ENCODE measurements at regions of chr16 and their contacts with region 1.

Region 1: GRCh38 chr16:20928774-20929411 is 28.3 kb downstream of the LYRM1 start:
- DNase-seq: peak; percentile 29
- CTCF ChIP-seq: no peak

Region 2: DNA sequence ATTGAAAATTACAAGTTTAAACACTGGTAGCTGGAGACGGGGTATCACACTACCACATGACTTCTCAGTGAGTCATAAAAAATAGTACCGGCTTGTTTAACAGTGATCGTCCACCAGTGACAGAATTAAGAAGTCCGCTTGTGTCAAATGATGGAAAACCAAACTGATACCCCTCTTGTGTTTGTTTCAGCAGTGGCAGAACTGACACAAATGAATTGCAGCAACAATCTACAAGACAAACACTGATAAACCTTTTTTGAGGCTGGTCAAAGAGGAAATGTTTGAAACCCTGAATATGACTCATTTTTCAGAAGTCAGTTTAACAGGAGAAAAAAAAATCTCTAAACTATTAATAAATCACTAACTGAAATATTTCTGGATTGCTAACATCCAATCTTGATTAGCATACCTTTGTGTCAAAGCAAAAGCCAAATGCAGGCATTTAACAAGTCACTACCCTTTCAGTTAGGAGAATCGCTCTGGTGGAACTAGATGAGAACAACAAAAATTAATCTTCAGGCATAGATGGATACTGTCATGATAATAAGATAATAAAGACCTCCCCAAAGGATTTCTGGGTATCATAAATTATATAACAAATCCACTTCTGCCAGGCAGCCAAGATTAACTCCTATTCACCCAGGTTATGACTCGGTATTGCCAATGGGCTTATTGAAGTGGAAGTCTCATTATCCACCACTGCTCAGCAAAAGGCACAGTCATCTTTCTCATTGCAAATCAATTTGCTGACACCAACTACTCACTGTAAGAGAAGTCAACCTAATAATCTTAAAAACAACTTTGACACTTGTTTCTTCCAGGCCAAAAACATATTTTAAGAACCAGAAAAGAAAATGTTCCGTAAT is 49.5 kb before region 1 on chr16:
- CTCF ChIA-PET with region 1: no interaction called
- POLR2A ChIA-PET with region 1: no interaction called
- DNase-seq: peak; percentile 40
- CTCF ChIP-seq: no peak

Region 3: GRCh38 chr16:20910781-20911321 is 18.0 kb before region 1 on chr16:
- CTCF ChIA-PET with region 1: no interaction called
- POLR2A ChIA-PET with region 1: interaction called, 15 read pairs
- DNase-seq: no peak
- CTCF ChIP-seq: no peak

Region 4: DNA sequence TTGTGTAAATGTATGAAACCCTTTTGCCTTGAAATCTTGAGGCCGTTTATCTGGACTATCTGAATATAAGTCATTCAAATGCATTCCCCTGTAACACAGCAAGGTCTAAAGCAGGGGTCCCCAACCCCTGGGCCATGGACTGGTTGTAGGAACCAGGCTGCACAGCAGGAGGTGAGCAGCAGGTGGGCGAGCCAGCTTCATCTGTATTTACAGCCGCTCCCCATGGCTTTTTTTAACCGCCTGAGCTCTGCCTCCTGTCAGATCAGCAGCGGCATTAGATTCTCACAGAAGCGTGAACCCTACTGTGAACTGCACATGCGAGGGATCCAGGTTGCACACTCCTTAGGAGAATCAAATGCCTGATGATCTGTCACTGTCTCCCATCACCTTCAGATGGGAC is 197.6 kb after region 1 on chr16:
- CTCF ChIA-PET with region 1: no interaction called
- POLR2A ChIA-PET with region 1: no interaction called
- DNase-seq: no peak
- CTCF ChIP-seq: no peak

Measured in GM10248 (cell line).